HepG2 (cell line): ENCODE measurements at regions of chr15 and their contacts with region 1.

Region 1: GRCh38 chr15:42332331-42332730 is 27.0 kb upstream of the CAPN3 start:
- DNase-seq: no peak
- ATAC-seq: no peak
- H3K4me3 ChIP-seq: no peak overlapping the region
- H3K27ac ChIP-seq: no peak overlapping the region
- H3K4me1 ChIP-seq: no peaks in the 10 kb centered on the region
- H3K27me3 ChIP-seq: no peaks in the 10 kb centered on the region
- CTCF ChIP-seq: no peak
- EP300 ChIP-seq: no peak
- POLR2A ChIP-seq: no peak
- RAD21 ChIP-seq: no peak

Region 2: GRCh38 chr15:42279234-42279723 is 53.1 kb before region 1 on chr15:
- CTCF ChIA-PET with region 1: no interaction called
- POLR2A ChIA-PET with region 1: no interaction called
- in situ Hi-C with region 1: no loop called
- intact Hi-C with region 1: no loop called
- DNase-seq: no peak
- ATAC-seq: no peak
- H3K4me3 ChIP-seq: no peak overlapping the region
- H3K27ac ChIP-seq: no peak overlapping the region
- H3K4me1 ChIP-seq: peaks cover 9% of the 10 kb centered on the region
- H3K27me3 ChIP-seq: no peaks in the 10 kb centered on the region; a peak in 1 of 5 replicates
- CTCF ChIP-seq: no peak
- EP300 ChIP-seq: no peak
- POLR2A ChIP-seq: no peak
- RAD21 ChIP-seq: no peak

Region 3: DNA sequence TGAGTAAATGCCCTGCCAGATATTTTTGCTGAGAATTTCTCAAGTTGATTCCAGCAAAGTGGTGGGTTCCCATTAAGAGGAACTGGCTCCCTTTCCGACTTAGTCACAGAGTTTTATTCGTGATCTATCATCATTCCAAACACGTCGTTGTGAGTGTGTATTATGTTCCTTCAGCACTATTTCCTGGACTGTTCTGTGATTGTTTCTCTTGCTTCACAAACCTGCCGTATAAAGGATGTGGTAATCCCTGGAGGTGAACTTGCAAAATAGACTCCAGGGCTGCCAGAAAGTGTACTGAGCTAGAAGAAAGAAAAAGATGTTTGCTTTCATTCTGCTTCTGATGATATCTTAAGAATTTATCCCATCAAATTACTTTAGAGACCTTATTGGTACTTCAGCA is 12.4 kb after region 1 on chr15:
- CTCF ChIA-PET with region 1: no interaction called
- POLR2A ChIA-PET with region 1: no interaction called
- in situ Hi-C with region 1: no loop called
- intact Hi-C with region 1: loop called (anchors 2 kb)
- DNase-seq: no peak
- ATAC-seq: no peak
- H3K4me3 ChIP-seq: no peak overlapping the region
- H3K27ac ChIP-seq: no peak overlapping the region
- H3K4me1 ChIP-seq: no peaks in the 10 kb centered on the region
- H3K27me3 ChIP-seq: no peaks in the 10 kb centered on the region
- CTCF ChIP-seq: no peak
- EP300 ChIP-seq: no peak
- POLR2A ChIP-seq: no peak
- RAD21 ChIP-seq: no peak

Region 4: GRCh38 chr15:42371125-42371524 is 38.8 kb after region 1 on chr15:
- CTCF ChIA-PET with region 1: no interaction called
- POLR2A ChIA-PET with region 1: no interaction called
- in situ Hi-C with region 1: no loop called
- intact Hi-C with region 1: no loop called
- DNase-seq: peak; percentile 42
- ATAC-seq: peak; percentile 39; the same call in 1 of the 3 replicates
- H3K4me3 ChIP-seq: no peak overlapping the region
- H3K27ac ChIP-seq: no peak overlapping the region
- H3K4me1 ChIP-seq: peaks cover 26% of the 10 kb centered on the region
- H3K27me3 ChIP-seq: no peaks in the 10 kb centered on the region
- CTCF ChIP-seq: peak; percentile 36
- EP300 ChIP-seq: no peak
- POLR2A ChIP-seq: no peak
- RAD21 ChIP-seq: no peak